Vagina (tissue), 2 donors: ENCODE measurements at regions of chr19 and their contacts with region 1.

Region 1: GRCh38 chr19:3879656-3880055 is 829 bp upstream of the ATCAY start:
- DNase-seq: no peak
- H3K4me3 ChIP-seq: no peak overlapping the region
- H3K27ac ChIP-seq: no peak overlapping the region
- H3K4me1 ChIP-seq: no peaks in the 10 kb centered on the region
- H3K27me3 ChIP-seq: peaks cover 9% of the 10 kb centered on the region
- CTCF ChIP-seq: no peak
- POLR2A ChIP-seq: no peak

Region 2: GRCh38 chr19:3479177-3479833 is 400.4 kb before region 1 on chr19:
- intact Hi-C with region 1: loop called (anchors 5 kb)
- DNase-seq: no peak
- H3K4me3 ChIP-seq: no peak overlapping the region
- H3K27ac ChIP-seq: no peak overlapping the region
- H3K4me1 ChIP-seq: no peaks in the 10 kb centered on the region
- H3K27me3 ChIP-seq: no peaks in the 10 kb centered on the region
- CTCF ChIP-seq: no peak
- POLR2A ChIP-seq: no peak